Naive thymus-derived CD4-positive, alpha-beta T cell (primary cell): ENCODE measurements at regions of chr5 and their contacts with region 1.

Region 1: GRCh38 chr5:180689071-180689694 is 39.8 kb upstream of the FLT4 start:
- DNase-seq: peak in 8 of 9 donors; percentile 27 to 80 (median 74)
- ATAC-seq: peak; percentile 88
- H3K4me3 ChIP-seq: peak overlapping the region; percentile 35
- H3K4me3 Mint-ChIP-seq: peak overlapping the region; percentile 52 to 87 (median 79)
- H3K27ac ChIP-seq: peak overlapping the region; percentile 75
- H3K27ac Mint-ChIP-seq: peak overlapping the region; percentile 51 to 98 (median 97)
- H3K4me1 ChIP-seq: peaks cover 29 to 75% of the 10 kb centered on the region in 2 donors
- H3K4me1 Mint-ChIP-seq: peaks cover 22 to 85% (median 80%) of the 10 kb centered on the region in 7 donors
- H3K27me3 ChIP-seq: no peaks in the 10 kb centered on the region
- H3K27me3 Mint-ChIP-seq: peaks cover 0 to 10% (median 0%) of the 10 kb centered on the region in 5 donors

Region 2: GRCh38 chr5:180026320-180026719 is 662.9 kb before region 1 on chr5:
- CTCF ChIA-PET with region 1: no interaction called
- POLR2A ChIA-PET with region 1: no interaction called
- intact Hi-C with region 1: no loop called
- DNase-seq: no peak
- ATAC-seq: peak; percentile 78
- H3K4me3 ChIP-seq: no peak overlapping the region
- H3K4me3 Mint-ChIP-seq: no peak overlapping the region
- H3K27ac ChIP-seq: no peak overlapping the region
- H3K27ac Mint-ChIP-seq: no peak overlapping the region
- H3K4me1 ChIP-seq: no peaks in the 10 kb centered on the region
- H3K4me1 Mint-ChIP-seq: peaks cover 0 to 11% (median 2%) of the 10 kb centered on the region in 7 donors
- H3K27me3 ChIP-seq: no peaks in the 10 kb centered on the region
- H3K27me3 Mint-ChIP-seq: no peaks in the 10 kb centered on the region

Region 3: DNA sequence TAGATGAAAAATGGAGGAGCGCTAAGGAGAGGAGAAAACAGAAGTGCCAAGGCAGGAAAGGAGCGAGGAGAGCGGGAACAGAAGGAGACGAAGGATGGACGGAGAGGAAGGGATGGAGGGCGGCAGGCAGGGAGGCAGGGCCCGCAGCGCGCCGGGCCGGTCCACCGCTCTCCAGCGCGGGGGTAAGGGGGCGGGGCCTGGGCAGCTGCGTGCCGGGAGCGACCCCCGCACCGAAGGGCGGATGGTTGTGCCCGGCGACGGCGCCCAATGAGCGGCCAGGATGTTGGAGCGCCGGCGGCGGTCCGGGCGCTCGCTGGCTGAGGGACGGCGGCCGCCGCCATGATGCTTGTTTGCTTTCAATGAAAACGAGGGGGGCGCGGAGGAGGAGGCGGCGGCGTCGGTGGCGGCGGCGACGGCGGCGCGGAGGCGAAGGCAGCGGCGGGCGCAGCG is 195.1 kb before region 1 on chr5 and contains the start of gene CNOT6:
- CTCF ChIA-PET with region 1: no interaction called
- POLR2A ChIA-PET with region 1: no interaction called
- intact Hi-C with region 1: loop called in 1 of 2 experiments (anchors 10 kb)
- DNase-seq: peak; percentile 91 to 98 (median 95)
- ATAC-seq: peak; percentile 98
- H3K4me3 ChIP-seq: peak within 1 kb of the TSS; percentile 83
- H3K4me3 Mint-ChIP-seq: peak within 1 kb of the TSS; percentile 85 to 99 (median 96)
- H3K27ac ChIP-seq: peak within 1 kb of the TSS; percentile 98
- H3K27ac Mint-ChIP-seq: peak within 1 kb of the TSS; percentile 84 to 98 (median 95)
- H3K4me1 ChIP-seq: peaks cover 10 to 27% of the 10 kb centered on the region in 2 donors
- H3K4me1 Mint-ChIP-seq: peaks cover 29 to 42% (median 35%) of the 10 kb centered on the region in 7 donors
- H3K27me3 ChIP-seq: no peaks in the 10 kb centered on the region
- H3K27me3 Mint-ChIP-seq: no peaks in the 10 kb centered on the region
- total RNA-seq, gene CNOT6: 22.8 to 41.9 (median 30.0) TPM

Region 4: DNA sequence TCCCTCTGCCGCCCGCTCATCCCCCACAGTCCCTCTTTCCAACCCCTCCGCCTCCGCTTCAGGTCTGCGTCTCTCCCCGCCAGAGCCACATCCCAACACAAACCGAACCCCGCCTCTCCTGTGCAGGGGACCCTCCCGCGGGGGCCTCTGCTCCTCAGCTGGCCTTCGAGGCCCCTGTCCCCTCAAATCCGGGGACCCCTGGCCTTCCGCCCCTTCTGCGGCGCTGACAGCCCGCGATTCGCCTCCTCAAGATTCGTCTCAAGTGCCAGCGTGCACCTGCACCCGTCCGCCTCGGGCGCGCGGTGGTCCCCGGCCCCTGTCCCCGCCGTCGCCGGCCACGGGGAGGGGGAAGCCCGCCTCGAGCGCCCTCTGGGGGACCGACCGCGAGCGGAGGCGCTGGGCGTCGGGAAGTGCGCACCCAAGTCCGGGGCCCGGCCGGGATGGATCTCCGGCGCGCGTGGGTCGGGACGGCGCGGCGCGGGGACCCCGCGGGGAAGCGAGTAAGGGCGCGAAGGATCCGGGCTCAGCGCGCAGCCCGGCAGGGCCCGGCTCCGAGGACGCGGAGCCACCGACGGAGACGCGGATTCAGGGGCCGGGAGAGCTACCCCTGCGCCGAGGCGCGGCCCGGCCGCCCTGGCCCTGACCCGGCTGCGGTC is 40.4 kb before region 1 on chr5:
- CTCF ChIA-PET with region 1: interaction called, 4 read pairs
- POLR2A ChIA-PET with region 1: interaction called, 3 read pairs
- intact Hi-C with region 1: loop called in 1 of 2 experiments (anchors 5 kb)
- DNase-seq: peak in 1 of 9 donors; percentile 28
- ATAC-seq: peak; percentile 15
- H3K4me3 ChIP-seq: peak overlapping the region; percentile 20
- H3K4me3 Mint-ChIP-seq: peak overlapping the region; percentile 61 to 89 (median 78)
- H3K27ac ChIP-seq: no peak overlapping the region
- H3K27ac Mint-ChIP-seq: peak overlapping the region in 1 of 9 donors; percentile 47
- H3K4me1 ChIP-seq: no peaks in the 10 kb centered on the region
- H3K4me1 Mint-ChIP-seq: peaks cover 9 to 18% (median 12%) of the 10 kb centered on the region in 7 donors
- H3K27me3 ChIP-seq: peaks cover 0 to 4% of the 10 kb centered on the region in 2 donors
- H3K27me3 Mint-ChIP-seq: peaks cover 16 to 47% (median 31%) of the 10 kb centered on the region in 5 donors

Region 5: GRCh38 chr5:180670586-180671359 is 18.4 kb before region 1 on chr5:
- CTCF ChIA-PET with region 1: interaction called, 10 read pairs
- POLR2A ChIA-PET with region 1: interaction called, 5 read pairs
- intact Hi-C with region 1: loop called in 1 of 2 experiments (anchors 1 kb)
- DNase-seq: peak in 8 of 9 donors; percentile 35 to 61 (median 48)
- ATAC-seq: peak; percentile 75
- H3K4me3 ChIP-seq: no peak overlapping the region
- H3K4me3 Mint-ChIP-seq: peak overlapping the region; percentile 48 to 77 (median 62)
- H3K27ac ChIP-seq: no peak overlapping the region
- H3K27ac Mint-ChIP-seq: peak overlapping the region in 5 of 9 donors; percentile 0 to 79 (median 13)
- H3K4me1 ChIP-seq: no peaks in the 10 kb centered on the region
- H3K4me1 Mint-ChIP-seq: peaks cover 7 to 30% (median 23%) of the 10 kb centered on the region in 7 donors
- H3K27me3 ChIP-seq: no peaks in the 10 kb centered on the region
- H3K27me3 Mint-ChIP-seq: peaks cover 5 to 30% (median 7%) of the 10 kb centered on the region in 5 donors

Region 6: DNA sequence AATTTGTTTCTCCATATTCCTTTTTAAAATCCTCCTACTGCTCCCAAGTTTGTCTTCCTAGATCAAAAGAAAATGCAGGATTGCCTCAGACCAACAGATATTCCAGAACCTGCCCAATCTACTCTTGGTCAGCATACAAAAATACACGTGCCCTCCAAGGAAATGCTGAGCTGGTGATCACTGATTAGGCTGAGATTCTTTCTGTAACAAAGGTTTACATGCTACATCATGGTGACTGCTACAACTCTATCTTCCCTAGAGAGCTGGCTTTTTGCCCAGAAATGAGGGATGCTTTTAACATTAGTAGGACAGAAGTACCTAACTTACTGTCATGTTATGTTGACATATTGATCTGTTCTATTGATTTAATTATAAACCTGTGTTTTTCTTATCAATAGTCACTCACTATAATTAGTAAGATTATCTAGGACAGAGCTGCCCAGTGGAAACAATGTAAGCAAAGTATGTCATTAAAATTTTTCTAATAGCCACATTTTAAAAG is 15.2 kb after region 1 on chr5:
- CTCF ChIA-PET with region 1: no interaction called
- POLR2A ChIA-PET with region 1: interaction called, 6 read pairs
- intact Hi-C with region 1: loop called in 1 of 2 experiments (anchors 2 kb)
- DNase-seq: peak in 1 of 9 donors; percentile 7
- ATAC-seq: no peak
- H3K4me3 ChIP-seq: no peak overlapping the region
- H3K4me3 Mint-ChIP-seq: no peak overlapping the region
- H3K27ac ChIP-seq: no peak overlapping the region
- H3K27ac Mint-ChIP-seq: peak overlapping the region in 2 of 9 donors; percentile 9 to 32
- H3K4me1 ChIP-seq: no peaks in the 10 kb centered on the region
- H3K4me1 Mint-ChIP-seq: peaks cover 0 to 10% (median 8%) of the 10 kb centered on the region in 7 donors
- H3K27me3 ChIP-seq: no peaks in the 10 kb centered on the region
- H3K27me3 Mint-ChIP-seq: peaks cover 0 to 5% (median 0%) of the 10 kb centered on the region in 5 donors